ENCODE measurements at regions of chr6 and their contacts with region 1.

Region 1: GRCh38 chr6:107957909-107958688 is at the start of gene SEC63:
- DNase-seq: peak; percentile 98
- ATAC-seq: peak; percentile 98
- H3K4me3 Mint-ChIP-seq: peak within 1 kb of the TSS; percentile 100
- H3K27ac Mint-ChIP-seq: peak within 1 kb of the TSS; percentile 99
- H3K4me1 Mint-ChIP-seq: peaks cover 36% of the 10 kb centered on the region
- H3K27me3 Mint-ChIP-seq: peaks cover 2% of the 10 kb centered on the region
- total RNA-seq, gene SEC63: 98.7 to 100 TPM

Region 2: GRCh38 chr6:106512048-106512967 is 1445.8 kb before region 1 on chr6:
- CTCF ChIA-PET with region 1: no interaction called
- POLR2A ChIA-PET with region 1: no interaction called
- intact Hi-C with region 1: loop called in 1 of 2 experiments (anchors 10 kb)
- DNase-seq: peak; percentile 89
- ATAC-seq: peak; percentile 61
- H3K4me3 Mint-ChIP-seq: peak overlapping the region; percentile 87
- H3K27ac Mint-ChIP-seq: peak overlapping the region; percentile 93
- H3K4me1 Mint-ChIP-seq: peaks cover 50% of the 10 kb centered on the region
- H3K27me3 Mint-ChIP-seq: peaks cover 5% of the 10 kb centered on the region

Region 3: GRCh38 chr6:107459283-107460082 is 498.6 kb before region 1 on chr6 and contains the start of gene PDSS2:
- CTCF ChIA-PET with region 1: no interaction called
- POLR2A ChIA-PET with region 1: no interaction called
- intact Hi-C with region 1: loop called in 1 of 2 experiments (anchors 1 kb)
- DNase-seq: peak; percentile 100
- ATAC-seq: peak; percentile 96
- H3K4me3 Mint-ChIP-seq: peak within 1 kb of the TSS; percentile 82
- H3K27ac Mint-ChIP-seq: peak within 1 kb of the TSS; percentile 93
- H3K4me1 Mint-ChIP-seq: peaks cover 19% of the 10 kb centered on the region
- H3K27me3 Mint-ChIP-seq: no peaks in the 10 kb centered on the region
- total RNA-seq, gene PDSS2: 11.4 to 11.7 TPM

Region 4: DNA sequence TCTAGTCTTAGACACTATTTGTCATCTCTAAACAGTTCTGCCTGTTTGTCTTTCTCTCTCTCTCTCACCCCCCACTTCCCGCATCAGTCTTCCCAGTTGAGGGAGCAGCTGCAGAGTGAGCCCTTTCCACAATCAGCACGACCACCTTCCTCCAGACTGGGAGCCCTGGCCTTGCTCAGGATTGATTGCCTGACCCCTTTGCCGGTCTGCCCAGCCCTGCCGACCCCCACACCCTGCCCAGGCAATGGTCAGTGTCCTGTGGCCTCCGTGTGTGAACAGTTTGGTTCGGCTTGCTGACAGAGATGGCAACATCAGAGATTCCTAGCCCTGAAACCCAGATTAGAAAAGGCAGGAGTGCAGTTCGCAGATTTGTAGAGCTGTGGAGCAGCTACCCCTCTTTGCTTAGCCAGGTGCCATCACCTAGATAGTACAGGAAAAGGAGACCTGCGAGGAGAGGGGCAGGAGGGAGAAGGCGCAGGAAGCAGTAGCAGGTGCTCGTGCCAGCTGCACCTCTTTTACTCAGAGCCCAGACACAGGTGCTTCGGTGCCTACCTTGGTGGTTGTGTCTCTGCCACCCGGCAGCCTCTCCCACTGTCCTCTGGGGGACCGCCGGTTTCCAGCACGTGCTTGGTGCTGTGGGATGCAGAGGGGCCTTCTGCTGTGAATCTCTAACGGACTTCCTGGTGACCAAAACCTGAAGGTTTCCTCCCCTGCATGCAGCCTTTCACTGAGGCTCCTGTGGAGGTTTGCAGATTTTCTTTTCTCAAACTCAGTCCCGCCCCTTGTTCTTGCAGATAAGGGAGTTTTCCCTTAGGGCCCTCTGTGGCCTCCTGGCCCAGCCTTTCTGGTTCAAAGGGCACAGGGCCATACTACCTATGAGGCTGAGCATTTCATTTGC is 226.4 kb before region 1 on chr6:
- CTCF ChIA-PET with region 1: interaction called, 3 read pairs
- POLR2A ChIA-PET with region 1: interaction called, 4 read pairs
- intact Hi-C with region 1: loop called (anchors 5 to 10 kb)
- DNase-seq: peak; percentile 46
- ATAC-seq: peak; percentile 20
- H3K4me3 Mint-ChIP-seq: peak overlapping the region; percentile 79
- H3K27ac Mint-ChIP-seq: peak overlapping the region; percentile 91
- H3K4me1 Mint-ChIP-seq: peaks cover 82% of the 10 kb centered on the region
- H3K27me3 Mint-ChIP-seq: no peaks in the 10 kb centered on the region

Region 5: GRCh38 chr6:107917451-107918375 is 40.4 kb before region 1 on chr6:
- CTCF ChIA-PET with region 1: no interaction called
- POLR2A ChIA-PET with region 1: interaction called, 3 read pairs
- intact Hi-C with region 1: loop called in 1 of 2 experiments (anchors 2 kb)
- DNase-seq: peak; percentile 29
- ATAC-seq: peak; percentile 89
- H3K4me3 Mint-ChIP-seq: no peak overlapping the region
- H3K27ac Mint-ChIP-seq: peak overlapping the region; percentile 26
- H3K4me1 Mint-ChIP-seq: peaks cover 14% of the 10 kb centered on the region
- H3K27me3 Mint-ChIP-seq: no peaks in the 10 kb centered on the region

Region 6: GRCh38 chr6:108260809-108261569 is 302.9 kb after region 1 on chr6 and contains the start of gene SNX3:
- CTCF ChIA-PET with region 1: no interaction called
- POLR2A ChIA-PET with region 1: no interaction called
- intact Hi-C with region 1: loop called in 1 of 2 experiments (anchors 1 kb)
- DNase-seq: peak; percentile 94
- ATAC-seq: peak; percentile 93
- H3K4me3 Mint-ChIP-seq: peak within 1 kb of the TSS; percentile 80
- H3K27ac Mint-ChIP-seq: peak within 1 kb of the TSS; percentile 89
- H3K4me1 Mint-ChIP-seq: peaks cover 23% of the 10 kb centered on the region
- H3K27me3 Mint-ChIP-seq: no peaks in the 10 kb centered on the region
- total RNA-seq, gene SNX3: 77.1 to 112 TPM

Region 7: DNA sequence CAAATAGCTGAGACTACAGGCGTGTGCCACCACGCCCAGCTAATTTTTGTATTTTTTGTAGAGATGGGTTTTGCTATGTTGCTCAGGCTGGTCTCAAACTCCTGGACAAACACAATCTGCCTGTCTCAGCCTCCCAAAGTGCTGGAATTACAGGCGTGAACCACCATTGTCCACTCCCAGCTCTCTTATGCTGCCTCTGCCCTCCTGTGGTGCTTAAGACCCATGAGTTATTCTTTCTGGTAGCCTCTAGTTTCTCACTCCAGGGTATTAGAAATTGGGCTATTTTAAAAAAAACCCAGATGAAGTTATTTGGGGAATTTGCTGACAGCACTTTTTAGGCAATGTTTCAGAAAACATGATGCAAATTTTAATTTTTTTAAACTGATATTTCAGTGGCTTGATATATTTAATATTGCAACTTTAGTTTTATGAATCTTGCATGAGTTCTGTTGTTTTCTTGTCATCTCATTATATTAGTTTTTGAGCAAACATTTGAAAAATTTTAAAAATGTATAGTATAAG is 488.6 kb after region 1 on chr6:
- CTCF ChIA-PET with region 1: no interaction called
- POLR2A ChIA-PET with region 1: no interaction called
- intact Hi-C with region 1: loop called in 1 of 2 experiments (anchors 10 kb)
- DNase-seq: no peak
- ATAC-seq: no peak
- H3K4me3 Mint-ChIP-seq: no peak overlapping the region
- H3K27ac Mint-ChIP-seq: no peak overlapping the region
- H3K4me1 Mint-ChIP-seq: peaks cover 23% of the 10 kb centered on the region
- H3K27me3 Mint-ChIP-seq: peaks cover 30% of the 10 kb centered on the region